BJ (cell line): ENCODE measurements at regions of chr3 and their contacts with region 1.

Region 1: GRCh38 chr3:146189519-146190173 is 28.7 kb upstream of the PLOD2 start:
- DNase-seq: no peak
- H3K4me3 ChIP-seq: no peak overlapping the region
- H3K27me3 ChIP-seq: no peaks in the 10 kb centered on the region
- CTCF ChIP-seq: peak; percentile 76

Region 2: DNA sequence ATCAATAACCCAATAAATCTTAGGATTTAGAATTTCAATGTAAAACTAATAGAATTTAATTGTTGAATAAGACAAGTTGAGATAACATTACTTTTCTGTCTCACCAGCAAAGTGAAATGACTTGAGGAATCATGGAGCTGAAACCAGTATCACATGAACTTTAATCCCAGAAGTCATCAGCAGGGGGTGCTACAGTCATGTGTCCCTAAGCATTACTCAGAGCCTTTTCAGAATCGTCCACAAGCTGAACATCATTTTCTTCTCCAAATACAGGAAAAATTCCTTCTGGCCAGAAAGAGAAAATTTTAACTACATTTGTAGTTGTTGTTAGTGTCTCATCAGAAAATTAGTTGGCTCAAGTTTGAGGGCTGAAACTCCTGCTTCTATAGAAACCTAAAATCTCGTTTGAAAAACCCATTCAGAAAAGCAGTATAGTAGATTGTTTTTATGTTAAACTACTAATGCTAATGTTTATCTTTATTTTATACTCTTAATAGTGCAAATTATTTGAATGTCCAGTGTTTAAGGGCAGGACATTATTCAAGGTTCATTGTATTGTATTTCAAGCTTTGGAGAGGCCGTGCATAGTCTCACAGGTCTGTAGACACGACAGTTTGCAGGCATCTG is 412.8 kb before region 1 on chr3:
- CTCF ChIA-PET with region 1: interaction called, 29 read pairs
- POLR2A ChIA-PET with region 1: no interaction called
- DNase-seq: peak; percentile 4
- H3K4me3 ChIP-seq: no peak overlapping the region
- H3K27me3 ChIP-seq: no peaks in the 10 kb centered on the region
- CTCF ChIP-seq: peak; percentile 66

Region 3: GRCh38 chr3:146065573-146066006 is 124.1 kb before region 1 on chr3:
- CTCF ChIA-PET with region 1: interaction called, 33 read pairs
- POLR2A ChIA-PET with region 1: interaction called, 12 read pairs
- DNase-seq: peak; percentile 9
- H3K4me3 ChIP-seq: no peak overlapping the region
- H3K27me3 ChIP-seq: no peaks in the 10 kb centered on the region
- CTCF ChIP-seq: peak; percentile 55

Region 4: GRCh38 chr3:146177519-146177918 is 12.1 kb before region 1 on chr3:
- CTCF ChIA-PET with region 1: interaction called, 11 read pairs
- POLR2A ChIA-PET with region 1: no interaction called
- DNase-seq: no peak
- H3K4me3 ChIP-seq: no peak overlapping the region
- H3K27me3 ChIP-seq: no peaks in the 10 kb centered on the region
- CTCF ChIP-seq: no peak

Region 5: DNA sequence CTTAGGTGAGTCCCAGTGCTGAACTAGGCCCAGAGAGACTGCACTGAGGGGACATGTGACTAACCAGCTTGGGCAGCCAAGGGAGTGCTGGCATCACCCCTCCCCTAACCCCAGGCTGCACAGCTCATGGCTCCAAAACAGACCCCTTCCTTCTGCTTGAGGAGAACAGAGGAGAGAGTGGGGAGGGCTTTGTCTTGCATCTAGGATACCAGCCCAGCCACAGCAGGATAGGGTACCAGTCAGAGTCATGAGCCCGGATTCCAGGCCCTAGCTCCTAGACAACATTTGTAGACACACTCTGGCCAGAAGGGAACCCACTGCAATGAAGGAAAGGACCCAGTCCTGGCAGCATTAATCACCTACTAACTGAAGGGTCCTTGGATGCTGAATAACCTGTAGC is 111.1 kb after region 1 on chr3:
- CTCF ChIA-PET with region 1: no interaction called
- POLR2A ChIA-PET with region 1: no interaction called
- DNase-seq: no peak
- H3K4me3 ChIP-seq: no peak overlapping the region
- H3K27me3 ChIP-seq: no peaks in the 10 kb centered on the region
- CTCF ChIP-seq: no peak

Region 6: GRCh38 chr3:146326670-146327543 is 137.3 kb after region 1 on chr3:
- CTCF ChIA-PET with region 1: interaction called, 133 read pairs
- POLR2A ChIA-PET with region 1: interaction called, 5 read pairs
- DNase-seq: peak; percentile 18
- H3K4me3 ChIP-seq: no peak overlapping the region
- H3K27me3 ChIP-seq: no peaks in the 10 kb centered on the region
- CTCF ChIP-seq: peak; percentile 59